Activated T-helper 1 cell treated with anti-CD3 and anti-CD28 coated beads, Interleukin-12 subunit alpha, Interleukin-12 subunit beta, Interleukin-2, Interleukin-4 antibody, amounts not matched to agents 30 ng/mL and 10 ng/mL and 1 ng/mL, durations not matched to agents 14 hours and 24 hours and 36 hours (primary cell): ENCODE measurements at regions of chr5 and their contacts with region 1.

Region 1: DNA sequence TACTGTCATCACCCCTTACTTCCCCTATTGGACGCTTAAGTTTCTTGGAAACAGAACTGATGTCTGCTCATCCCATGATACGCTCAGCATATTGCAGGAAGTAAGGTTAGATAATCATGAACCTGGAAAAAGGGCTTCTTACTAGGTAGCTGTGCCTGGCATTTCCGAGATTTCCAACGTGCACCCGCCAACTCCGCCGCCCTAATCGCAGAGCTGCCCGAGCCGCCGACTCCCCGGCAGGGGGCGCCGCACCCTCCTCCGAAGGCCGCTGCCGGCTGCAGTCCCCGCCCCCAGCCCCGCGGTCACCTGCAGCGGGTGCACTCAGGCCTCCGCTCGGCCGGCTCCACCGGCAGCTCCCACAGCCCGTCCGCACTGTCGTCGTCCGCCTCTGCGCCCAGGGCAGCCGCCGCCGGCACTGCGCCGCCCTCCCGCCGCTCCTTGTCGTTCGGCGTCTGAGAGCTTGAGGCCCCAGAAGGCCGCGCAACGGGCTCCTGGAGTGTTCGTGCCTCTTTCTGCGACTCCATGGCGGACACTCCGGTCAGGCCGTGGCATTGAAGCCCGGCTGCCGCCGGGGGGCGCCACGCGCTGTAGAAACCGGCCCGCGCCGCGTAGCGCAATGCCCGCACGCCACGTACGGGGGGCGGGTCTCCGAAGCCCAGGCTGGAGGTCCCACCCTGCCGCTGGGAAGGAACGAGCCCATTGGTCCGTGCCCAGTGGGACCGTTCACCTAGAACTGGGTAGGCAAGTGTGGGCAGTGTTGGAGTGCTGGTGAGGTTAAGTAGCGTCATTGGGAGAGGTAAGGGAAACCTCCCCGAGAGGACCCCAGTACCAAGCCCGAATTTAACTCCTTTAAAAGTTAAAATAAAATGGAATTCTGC is at the start of gene DTWD2:
- DNase-seq: peak; percentile 90
- H3K4me3 Mint-ChIP-seq: peak within 1 kb of the TSS; percentile 78
- H3K27ac Mint-ChIP-seq: peak within 1 kb of the TSS; percentile 32
- H3K4me1 Mint-ChIP-seq: peaks cover 12% of the 10 kb centered on the region
- H3K27me3 Mint-ChIP-seq: no peaks in the 10 kb centered on the region
- total RNA-seq, gene DTWD2: 1.6 and 1.9 TPM in 2 replicates

Region 2: DNA sequence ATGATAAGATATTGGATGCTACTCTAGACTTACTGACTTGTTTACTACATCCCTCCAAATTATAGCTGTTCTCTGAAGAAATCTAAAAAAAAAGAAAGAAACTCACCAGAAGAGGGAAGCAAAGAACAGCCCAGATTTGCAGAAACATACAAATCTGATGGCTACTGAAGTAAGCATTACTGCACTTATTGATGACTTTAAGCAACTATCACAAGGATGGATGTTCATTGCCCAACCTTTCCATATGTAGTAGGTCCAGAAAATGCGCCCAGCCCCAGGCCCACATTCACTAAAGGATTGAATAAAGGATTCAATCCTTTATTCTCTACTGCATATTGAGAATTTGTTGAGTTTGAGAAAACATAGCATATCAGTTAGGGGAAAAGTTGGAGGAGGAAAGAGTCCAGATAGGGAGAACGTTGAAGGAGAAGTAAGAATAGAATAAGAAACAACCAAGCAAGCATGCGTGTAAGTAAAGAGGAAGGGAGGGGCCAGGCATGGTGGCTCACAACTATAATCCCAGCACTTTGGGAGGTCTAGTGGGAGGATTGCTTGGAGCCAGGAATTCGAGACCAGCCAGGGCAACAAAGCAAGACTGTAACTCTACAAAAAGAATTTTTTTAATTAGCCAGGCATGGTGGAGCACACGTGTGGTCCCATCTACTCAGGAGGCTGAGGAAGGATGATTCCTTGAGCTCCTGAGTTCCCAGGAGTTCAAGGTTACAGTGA is 34.0 kb after region 1 on chr5:
- intact Hi-C with region 1: loop called (anchors 2 kb)
- DNase-seq: no peak
- H3K4me3 Mint-ChIP-seq: no peak overlapping the region
- H3K27ac Mint-ChIP-seq: no peak overlapping the region
- H3K4me1 Mint-ChIP-seq: peaks cover 4% of the 10 kb centered on the region
- H3K27me3 Mint-ChIP-seq: peaks cover 1% of the 10 kb centered on the region

Region 3: GRCh38 chr5:119079318-119079921 is 91.2 kb after region 1 on chr5:
- intact Hi-C with region 1: loop called (anchors 1 kb)
- DNase-seq: peak; percentile 25
- H3K4me3 Mint-ChIP-seq: peak overlapping the region; percentile 23
- H3K27ac Mint-ChIP-seq: peak overlapping the region; percentile 70
- H3K4me1 Mint-ChIP-seq: peaks cover 50% of the 10 kb centered on the region
- H3K27me3 Mint-ChIP-seq: no peaks in the 10 kb centered on the region

Region 4: DNA sequence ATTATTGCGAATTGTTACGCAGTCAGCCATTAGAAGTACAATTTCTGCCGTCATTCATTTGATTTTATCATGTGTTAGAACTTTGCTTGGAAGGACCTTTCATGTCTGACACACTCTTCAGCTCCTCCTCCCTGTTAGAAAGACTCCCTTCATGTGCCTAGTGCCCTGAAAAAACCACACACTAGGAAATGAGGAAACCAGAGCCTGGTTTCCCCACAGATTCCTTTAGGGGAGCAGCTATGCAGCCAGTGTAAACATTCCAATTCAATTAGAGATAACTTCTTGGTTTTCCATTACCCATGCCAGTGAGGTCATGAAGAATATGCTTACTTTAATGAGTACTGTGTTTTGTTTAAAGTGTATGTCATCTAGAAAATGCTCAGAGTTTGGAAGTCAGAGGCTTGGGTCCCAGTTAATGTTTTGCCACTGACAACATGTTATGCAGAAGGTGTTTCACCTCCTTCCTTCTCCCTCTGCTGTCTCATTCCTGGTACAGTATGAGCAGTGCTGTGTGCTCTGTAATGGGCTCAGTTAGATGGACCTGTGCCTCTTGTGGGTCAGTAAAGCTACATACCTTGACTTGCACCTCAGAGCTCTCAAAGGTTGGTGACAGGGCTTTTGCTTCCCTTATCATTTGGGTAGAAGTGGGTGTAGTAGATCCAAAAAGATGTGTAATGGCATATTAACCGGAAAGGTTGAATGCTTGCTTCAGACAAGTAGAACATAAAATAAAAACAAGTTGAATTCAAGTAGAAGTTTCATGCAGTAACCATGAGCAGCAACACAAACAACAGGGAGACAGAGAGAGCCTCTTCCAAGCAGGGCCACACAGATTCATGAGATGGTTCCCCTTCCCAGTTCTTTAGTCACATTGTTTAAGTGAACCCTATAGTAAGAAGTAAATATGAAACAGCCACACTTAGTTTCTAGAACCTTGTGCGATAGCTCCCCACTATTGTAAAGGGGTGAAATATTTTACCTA is 315.0 kb after region 1 on chr5:
- intact Hi-C with region 1: loop called (anchors 5 kb)
- DNase-seq: no peak
- H3K4me3 Mint-ChIP-seq: peak overlapping the region; percentile 48
- H3K27ac Mint-ChIP-seq: peak overlapping the region; percentile 73
- H3K4me1 Mint-ChIP-seq: peaks cover 87% of the 10 kb centered on the region
- H3K27me3 Mint-ChIP-seq: no peaks in the 10 kb centered on the region

Region 5: DNA sequence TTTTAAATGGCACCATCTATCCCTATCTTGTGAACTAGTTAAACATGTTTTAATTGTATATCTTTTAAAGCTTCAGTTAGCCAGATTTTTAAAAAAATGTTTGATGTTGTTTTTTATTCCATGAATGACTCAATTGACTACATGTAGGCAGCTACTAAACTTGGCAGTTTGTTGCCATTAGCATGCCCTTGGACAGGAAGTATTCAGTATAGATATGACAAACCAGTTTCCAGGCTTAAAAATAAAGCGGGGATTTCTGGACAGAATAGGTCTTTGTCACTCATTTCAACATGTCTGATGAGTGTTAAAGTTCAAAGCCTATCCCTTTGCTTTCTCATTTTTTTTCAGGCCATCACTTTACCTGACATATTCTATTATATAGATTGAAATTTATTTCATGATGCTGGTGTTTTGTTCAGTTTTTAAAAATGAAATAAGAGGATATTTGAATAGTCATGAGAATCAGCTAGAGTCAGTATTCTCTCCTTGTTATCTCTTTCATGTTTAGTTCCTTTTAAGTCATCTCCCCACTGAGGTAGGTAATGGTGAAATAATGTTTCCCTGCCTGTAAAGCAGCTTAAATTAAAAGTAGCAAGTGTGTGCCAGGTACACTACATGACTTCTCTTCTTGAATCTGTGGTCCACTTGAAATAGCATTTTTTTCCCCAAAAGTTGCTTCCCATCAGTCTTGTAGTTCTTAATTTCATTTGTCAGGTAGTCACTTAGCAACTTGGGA is 379.4 kb after region 1 on chr5:
- intact Hi-C with region 1: loop called (anchors 1 kb)
- DNase-seq: no peak
- H3K4me3 Mint-ChIP-seq: peak overlapping the region; percentile 84
- H3K27ac Mint-ChIP-seq: peak overlapping the region; percentile 95
- H3K4me1 Mint-ChIP-seq: peaks cover 85% of the 10 kb centered on the region
- H3K27me3 Mint-ChIP-seq: no peaks in the 10 kb centered on the region

Region 6: GRCh38 chr5:119435436-119436132 is 447.4 kb after region 1 on chr5:
- intact Hi-C with region 1: loop called (anchors 1 kb)
- DNase-seq: peak; percentile 43
- H3K4me3 Mint-ChIP-seq: no peak overlapping the region
- H3K27ac Mint-ChIP-seq: no peak overlapping the region
- H3K4me1 Mint-ChIP-seq: peaks cover 26% of the 10 kb centered on the region
- H3K27me3 Mint-ChIP-seq: peaks cover 12% of the 10 kb centered on the region

Region 7: DNA sequence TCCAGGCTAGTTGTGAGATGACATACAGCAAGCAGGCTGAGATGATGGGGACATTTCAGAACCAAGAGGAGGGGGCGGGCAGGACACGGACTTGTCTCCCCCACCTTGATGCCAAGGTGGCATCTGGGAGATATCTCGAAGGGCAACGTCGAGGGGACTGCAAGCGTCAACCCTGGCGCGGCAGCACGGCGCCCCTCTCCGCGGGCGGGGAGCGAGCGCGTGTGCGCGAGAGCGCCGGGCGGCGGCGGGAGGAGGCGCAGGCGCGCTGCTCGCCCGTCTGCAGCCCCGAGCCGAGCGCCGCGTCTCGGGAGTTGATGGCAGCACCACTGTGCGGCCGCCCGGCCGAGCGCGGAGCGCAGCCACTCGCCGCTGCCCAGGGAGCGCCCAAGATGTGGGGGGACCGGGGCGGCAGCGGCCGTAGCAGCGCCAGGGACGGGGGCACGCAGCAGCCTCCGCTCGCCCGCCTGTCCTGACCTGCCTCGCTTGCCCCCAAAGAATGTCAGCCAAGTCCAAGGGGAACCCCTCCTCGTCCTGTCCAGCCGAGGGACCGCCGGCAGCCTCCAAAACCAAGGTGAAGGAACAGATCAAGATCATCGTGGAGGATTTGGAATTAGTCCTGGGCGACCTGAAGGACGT is 1475.9 kb after region 1 on chr5 and contains the start of gene PRR16:
- intact Hi-C with region 1: loop called (anchors 10 kb)
- DNase-seq: no peak
- H3K4me3 Mint-ChIP-seq: peak within 1 kb of the TSS; percentile 69
- H3K27ac Mint-ChIP-seq: peak within 1 kb of the TSS; percentile 23
- H3K4me1 Mint-ChIP-seq: no peaks in the 10 kb centered on the region
- H3K27me3 Mint-ChIP-seq: peaks cover 51% of the 10 kb centered on the region
- total RNA-seq, gene PRR16: not detected in 2 replicates